Activated naive CD4-positive, alpha-beta T cell treated with anti-CD3 and anti-CD28 coated beads for 36 hours (primary cell): ENCODE measurements at regions of chr6 and their contacts with region 1.

Region 1: DNA sequence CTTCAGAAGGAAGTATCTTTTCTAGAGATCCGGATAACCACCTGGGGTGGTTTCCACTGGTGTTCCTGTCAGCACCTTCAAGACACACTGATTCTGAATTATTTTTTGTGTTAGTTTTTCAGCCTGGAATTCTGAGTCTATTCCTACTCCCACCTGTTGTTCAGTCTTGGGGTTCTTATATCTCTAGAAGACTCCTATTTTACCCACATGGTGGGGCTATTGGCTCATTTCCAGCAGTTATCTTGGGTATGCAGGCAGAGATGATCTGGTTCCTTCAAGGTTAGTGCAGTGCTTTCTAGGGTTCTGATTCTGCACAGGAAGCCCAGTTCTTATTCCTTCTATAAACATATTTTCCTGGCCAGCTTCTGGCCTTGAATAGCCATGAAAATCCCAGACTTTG is 175.6 kb upstream of the PDE7B start:
- DNase-seq: peak; percentile 58
- H3K4me3 Mint-ChIP-seq: no peak overlapping the region
- H3K27ac Mint-ChIP-seq: no peak overlapping the region
- H3K4me1 Mint-ChIP-seq: peaks cover 10% of the 10 kb centered on the region
- H3K27me3 Mint-ChIP-seq: peaks cover 1% of the 10 kb centered on the region

Region 2: GRCh38 chr6:135451693-135452092 is 224.2 kb before region 1 on chr6:
- CTCF ChIA-PET with region 1: no interaction called
- intact Hi-C with region 1: loop called (anchors 5 kb)
- DNase-seq: no peak
- H3K4me3 Mint-ChIP-seq: no peak overlapping the region
- H3K27ac Mint-ChIP-seq: no peak overlapping the region
- H3K4me1 Mint-ChIP-seq: no peaks in the 10 kb centered on the region
- H3K27me3 Mint-ChIP-seq: no peaks in the 10 kb centered on the region

Region 3: DNA sequence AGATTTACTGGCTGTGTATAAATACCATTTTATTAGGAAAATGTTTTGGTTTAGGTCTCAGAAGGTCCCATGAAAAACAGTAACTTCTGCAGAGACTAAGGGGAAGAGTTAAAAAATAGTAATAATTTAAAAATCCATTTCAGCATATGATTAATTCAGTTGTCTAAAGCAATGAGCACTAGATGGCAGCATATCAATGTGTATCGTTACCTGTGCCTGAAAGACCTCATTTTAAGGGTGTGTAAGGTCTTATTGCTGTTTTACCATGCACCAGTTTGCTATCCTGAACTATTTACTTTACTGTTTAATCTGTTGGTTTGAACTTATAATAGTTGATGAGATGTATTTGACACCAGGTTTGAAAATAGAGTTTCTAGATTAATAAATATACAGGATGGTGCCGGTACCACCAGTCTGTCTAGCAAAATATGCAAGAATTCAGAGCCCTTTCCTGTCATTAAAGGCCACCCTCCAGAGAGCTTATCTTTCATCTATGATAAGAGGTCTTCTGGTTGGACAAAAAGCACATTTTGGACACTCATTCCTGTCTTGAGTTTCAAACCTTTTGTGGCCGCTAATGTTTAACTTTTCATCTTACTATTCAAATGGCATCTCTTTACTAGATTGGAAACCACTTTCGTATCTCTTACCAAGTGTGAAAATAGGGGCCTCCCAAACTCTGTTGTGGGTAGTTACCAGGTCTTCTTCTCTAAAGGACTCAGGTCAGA is 169.4 kb before region 1 on chr6:
- CTCF ChIA-PET with region 1: no interaction called
- intact Hi-C with region 1: loop called (anchors 2 kb)
- DNase-seq: peak; percentile 12
- H3K4me3 Mint-ChIP-seq: no peak overlapping the region
- H3K27ac Mint-ChIP-seq: no peak overlapping the region
- H3K4me1 Mint-ChIP-seq: peaks cover 2% of the 10 kb centered on the region
- H3K27me3 Mint-ChIP-seq: no peaks in the 10 kb centered on the region